HEK293T (cell line): ENCODE measurements at regions of chr1 and their contacts with region 1.

Region 1: DNA sequence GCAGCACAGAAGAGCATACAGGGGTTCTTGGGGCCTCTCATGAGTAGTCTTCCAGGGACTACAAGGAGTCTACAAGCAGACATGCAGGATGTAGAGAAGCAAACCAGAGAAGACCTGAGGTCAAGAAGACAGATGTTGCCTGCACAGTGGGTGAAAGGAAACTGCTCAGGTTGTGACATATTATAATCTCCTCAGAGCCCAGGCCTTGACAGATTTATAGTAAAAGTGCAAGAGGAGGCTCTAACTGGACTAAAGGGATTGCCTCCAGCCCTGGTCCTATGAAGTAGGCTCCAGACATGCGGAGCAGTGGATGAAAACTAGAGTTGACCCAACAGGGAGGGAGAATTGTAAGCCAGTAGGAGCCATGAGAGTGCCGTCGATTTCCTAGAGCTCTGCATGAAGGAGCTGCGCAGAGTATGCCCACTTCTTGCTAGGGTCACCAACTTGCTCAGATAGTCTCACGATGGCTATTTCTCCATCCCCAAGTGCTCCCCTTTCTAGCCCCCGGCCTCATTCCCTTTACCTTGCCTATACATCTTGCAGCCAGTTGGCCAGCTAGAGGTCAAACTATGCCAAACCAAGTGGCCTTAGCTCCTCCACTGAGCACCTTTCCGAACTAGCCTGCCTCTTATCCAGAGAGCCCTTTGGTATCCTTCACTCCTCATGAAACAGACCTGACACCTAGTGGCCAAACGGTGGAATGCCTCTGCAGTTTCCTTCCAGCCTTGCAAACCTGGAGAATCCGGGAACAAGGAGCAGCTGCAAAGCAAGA is 36.2 kb upstream of the IPO9 start:
- DNase-seq: peak; percentile 90

Region 2: GRCh38 chr1:201709564-201710295 is 83.0 kb before region 1 on chr1:
- CTCF ChIA-PET with region 1: interaction called, 110 read pairs
- POLR2A ChIA-PET with region 1: interaction called, 3 read pairs
- DNase-seq: peak; percentile 83

Region 3: GRCh38 chr1:201719812-201720521 is 72.8 kb before region 1 on chr1:
- CTCF ChIA-PET with region 1: interaction called, 110 read pairs
- POLR2A ChIA-PET with region 1: no interaction called
- DNase-seq: peak; percentile 70

Region 4: DNA sequence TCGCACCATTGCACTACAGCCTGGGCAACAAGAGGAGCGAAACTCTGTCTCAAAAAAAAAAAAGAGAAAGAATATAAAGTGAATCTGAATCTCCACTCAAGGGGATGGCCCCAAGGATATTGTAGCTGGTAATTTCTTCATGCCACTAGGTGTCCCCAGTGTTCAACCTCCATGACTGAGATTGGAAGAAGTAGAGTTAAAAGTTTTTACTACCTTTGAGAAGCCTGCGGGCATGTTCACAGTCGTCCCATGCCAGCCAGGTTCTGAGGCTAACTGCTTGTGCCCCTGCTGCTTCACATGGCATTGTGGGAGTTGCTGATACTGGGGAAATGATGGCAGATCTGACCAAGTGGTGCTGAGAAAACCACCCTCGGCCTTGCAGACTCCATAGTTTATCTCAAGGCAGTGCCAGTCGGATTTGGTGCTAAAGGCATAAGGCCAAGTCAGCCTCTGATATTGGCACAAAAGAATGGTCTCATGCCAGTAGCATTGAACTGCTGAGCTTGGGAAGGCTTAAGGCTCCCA is 85.2 kb after region 1 on chr1:
- CTCF ChIA-PET with region 1: no interaction called
- POLR2A ChIA-PET with region 1: no interaction called
- DNase-seq: peak; percentile 69